ENCODE measurements at regions of chr14 and their contacts with region 1.

Region 1: DNA sequence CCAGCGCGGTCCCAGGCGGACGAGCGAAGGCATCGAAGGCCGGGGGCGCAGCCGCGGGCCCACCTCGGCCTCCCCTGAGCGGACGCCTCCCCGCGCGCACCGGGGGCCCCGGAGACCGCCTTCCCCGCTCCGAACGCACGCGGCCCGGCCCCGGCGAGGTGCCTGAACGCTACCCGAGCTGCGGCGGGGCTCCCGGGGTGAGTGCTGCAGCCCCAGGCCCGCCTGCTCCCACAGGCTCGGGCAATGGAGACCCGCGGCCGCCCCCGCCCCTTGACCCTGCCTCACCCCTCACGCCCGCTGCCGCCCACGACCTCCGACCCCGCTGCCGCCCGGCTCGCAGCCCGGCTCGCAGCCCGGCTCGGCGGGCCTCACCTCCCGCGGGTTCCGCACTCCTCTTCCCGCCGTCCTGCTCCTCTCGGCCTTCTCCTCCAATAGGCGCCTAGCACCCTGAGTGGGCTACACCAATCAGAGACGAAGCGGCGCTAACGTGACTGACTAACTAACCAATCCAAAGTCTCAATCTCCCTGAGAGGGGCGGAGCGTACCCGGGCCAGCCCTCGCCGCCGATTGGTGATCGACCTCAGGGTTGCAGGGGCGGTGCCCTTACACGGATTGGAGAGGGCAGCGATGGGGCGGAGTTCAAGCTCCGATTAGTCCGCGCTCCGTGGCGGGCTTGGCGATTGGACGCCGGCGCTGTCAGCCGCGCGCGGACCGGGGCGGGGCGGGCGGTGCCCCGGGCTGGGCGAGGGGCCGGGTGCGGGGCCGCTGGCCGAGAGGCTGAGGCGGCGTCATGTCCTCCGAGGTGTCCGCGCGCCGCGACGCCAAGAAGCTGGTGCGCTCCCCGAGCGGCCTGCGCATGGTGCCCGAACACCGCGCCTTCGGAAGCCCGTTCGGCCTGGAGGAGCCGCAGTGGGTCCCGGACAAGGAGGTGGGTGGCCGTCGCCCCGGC is at the starts of genes XRCC3 and ZFYVE21:
- DNase-seq: peak; percentile 96 to 100 (median 100)
- ATAC-seq: peak; percentile 97
- H3K4me3 ChIP-seq: peak within 1 kb of the TSS; percentile 56
- H3K4me3 Mint-ChIP-seq: peak within 1 kb of the TSS; percentile 89 to 98 (median 94)
- H3K27ac ChIP-seq: peak within 1 kb of the TSS; percentile 73
- H3K27ac Mint-ChIP-seq: peak within 1 kb of the TSS; percentile 40 to 95 (median 91)
- H3K4me1 ChIP-seq: peaks cover 8 to 13% of the 10 kb centered on the region in 2 donors
- H3K4me1 Mint-ChIP-seq: peaks cover 38 to 69% (median 52%) of the 10 kb centered on the region in 7 donors
- H3K27me3 ChIP-seq: no peaks in the 10 kb centered on the region
- H3K27me3 Mint-ChIP-seq: peaks cover 0 to 2% (median 0%) of the 10 kb centered on the region in 5 donors
- total RNA-seq, gene XRCC3: 9.3 to 38.9 (median 15.9) TPM
- total RNA-seq, gene ZFYVE21: 5.8 to 19.0 (median 16.8) TPM

Region 2: GRCh38 chr14:103385152-103385993 is 330.0 kb before region 1 on chr14 and contains the start of gene MARK3:
- CTCF ChIA-PET with region 1: no interaction called
- POLR2A ChIA-PET with region 1: no interaction called
- intact Hi-C with region 1: loop called (anchors 1 to 2 kb)
- DNase-seq: peak; percentile 92 to 96 (median 95)
- ATAC-seq: peak; percentile 93
- H3K4me3 ChIP-seq: peak within 1 kb of the TSS; percentile 98
- H3K4me3 Mint-ChIP-seq: peak within 1 kb of the TSS; percentile 94 to 99 (median 96)
- H3K27ac ChIP-seq: peak within 1 kb of the TSS; percentile 90
- H3K27ac Mint-ChIP-seq: peak within 1 kb of the TSS; percentile 91 to 98 (median 95)
- H3K4me1 ChIP-seq: peaks cover 26 to 32% of the 10 kb centered on the region in 2 donors
- H3K4me1 Mint-ChIP-seq: peaks cover 12 to 51% (median 37%) of the 10 kb centered on the region in 7 donors
- H3K27me3 ChIP-seq: no peaks in the 10 kb centered on the region
- H3K27me3 Mint-ChIP-seq: peaks cover 0 to 13% (median 9%) of the 10 kb centered on the region in 5 donors
- total RNA-seq, gene MARK3: 86.9 to 133 (median 116) TPM

Region 3: DNA sequence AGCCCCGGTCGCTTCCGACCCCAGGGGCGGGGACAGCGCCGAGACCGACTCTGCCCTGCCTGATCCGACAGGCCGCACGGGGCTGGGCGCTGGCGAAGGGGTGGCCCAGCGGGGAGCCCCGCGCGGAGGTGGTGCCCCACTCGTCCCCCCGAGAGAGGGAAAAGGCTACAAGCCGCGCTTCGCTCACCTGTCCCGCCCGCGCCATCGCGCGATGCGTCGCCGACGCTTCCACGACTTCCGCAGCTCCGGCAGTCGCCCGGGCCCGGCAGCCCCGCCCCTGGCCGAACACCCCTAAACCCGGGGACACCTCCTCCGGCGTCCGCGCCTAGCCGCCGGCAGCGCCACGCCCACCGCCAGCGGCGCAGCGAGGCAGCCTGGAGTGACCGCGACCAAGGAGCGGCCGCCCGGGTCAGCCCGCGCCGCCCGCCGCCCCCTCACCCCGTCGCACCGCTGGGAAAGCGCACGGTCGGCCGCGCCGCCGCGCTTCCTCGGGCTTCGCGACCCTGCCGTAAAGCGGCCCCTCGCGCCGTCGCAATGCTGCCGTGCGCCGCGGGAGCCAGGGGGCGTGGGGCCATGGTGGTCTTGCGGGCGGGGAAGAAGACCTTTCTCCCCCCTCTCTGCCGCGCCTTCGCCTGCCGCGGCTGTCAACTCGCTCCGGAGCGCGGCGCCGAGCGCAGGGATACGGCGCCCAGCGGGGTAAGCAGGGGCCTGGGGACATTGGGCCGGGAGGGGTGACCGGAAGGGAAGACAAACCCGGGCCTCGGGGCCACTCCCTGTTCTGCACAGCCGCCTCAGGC is 152.7 kb before region 1 on chr14 and contains the starts of genes BAG5 and COA8:
- CTCF ChIA-PET with region 1: no interaction called
- POLR2A ChIA-PET with region 1: no interaction called
- intact Hi-C with region 1: loop called (anchors 1 kb)
- DNase-seq: peak; percentile 81 to 94 (median 88)
- ATAC-seq: peak; percentile 91
- H3K4me3 ChIP-seq: peak within 1 kb of the TSS; percentile 91
- H3K4me3 Mint-ChIP-seq: peak within 1 kb of the TSS; percentile 91 to 98 (median 94)
- H3K27ac ChIP-seq: peak within 1 kb of the TSS; percentile 87
- H3K27ac Mint-ChIP-seq: peak within 1 kb of the TSS; percentile 87 to 96 (median 92)
- H3K4me1 ChIP-seq: peaks cover 32 to 38% of the 10 kb centered on the region in 2 donors
- H3K4me1 Mint-ChIP-seq: peaks cover 47 to 73% (median 62%) of the 10 kb centered on the region in 7 donors
- H3K27me3 ChIP-seq: no peaks in the 10 kb centered on the region
- H3K27me3 Mint-ChIP-seq: no peaks in the 10 kb centered on the region
- total RNA-seq, gene BAG5: 29.9 to 38.9 (median 36.4) TPM
- total RNA-seq, gene COA8: 13.6 to 26.3 (median 24.1) TPM

Region 4: DNA sequence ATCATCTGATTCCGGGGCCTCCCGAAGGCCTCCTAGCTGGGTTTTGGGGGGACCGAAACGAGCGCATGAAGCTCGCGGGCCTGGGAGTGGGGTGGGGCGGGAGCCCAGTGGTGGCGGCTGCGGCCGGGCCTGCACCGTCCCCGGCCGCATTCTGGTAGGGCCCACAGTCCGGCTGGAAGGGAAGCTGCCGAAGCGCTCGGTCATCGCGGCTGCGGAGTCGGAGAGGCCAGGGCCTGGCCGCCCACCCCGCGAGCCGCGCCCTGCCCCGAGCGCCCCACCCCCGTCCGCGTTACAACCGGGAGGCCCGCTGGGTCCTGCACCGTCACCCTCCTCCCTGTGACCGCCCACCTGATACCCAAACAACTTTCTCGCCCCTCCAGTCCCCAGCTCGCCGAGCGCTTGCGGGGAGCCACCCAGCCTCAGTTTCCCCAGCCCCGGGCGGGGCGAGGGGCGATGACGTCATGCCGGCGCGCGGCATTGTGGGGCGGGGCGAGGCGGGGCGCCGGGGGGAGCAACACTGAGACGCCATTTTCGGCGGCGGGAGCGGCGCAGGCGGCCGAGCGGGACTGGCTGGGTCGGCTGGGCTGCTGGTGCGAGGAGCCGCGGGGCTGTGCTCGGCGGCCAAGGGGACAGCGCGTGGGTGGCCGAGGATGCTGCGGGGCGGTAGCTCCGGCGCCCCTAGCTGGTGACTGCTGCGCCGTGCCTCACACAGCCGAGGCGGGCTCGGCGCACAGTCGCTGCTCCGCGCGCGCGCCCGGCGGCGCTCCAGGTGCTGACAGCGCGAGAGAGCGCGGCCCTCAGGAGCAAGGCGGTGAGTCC is 86.4 kb before region 1 on chr14 and contains the start of gene KLC1:
- CTCF ChIA-PET with region 1: no interaction called
- POLR2A ChIA-PET with region 1: interaction called, 3 read pairs
- intact Hi-C with region 1: loop called (anchors 1 kb)
- DNase-seq: peak; percentile 71 to 93 (median 84)
- ATAC-seq: peak; percentile 87
- H3K4me3 ChIP-seq: peak within 1 kb of the TSS; percentile 78
- H3K4me3 Mint-ChIP-seq: peak within 1 kb of the TSS; percentile 74 to 91 (median 88)
- H3K27ac ChIP-seq: peak within 1 kb of the TSS; percentile 98
- H3K27ac Mint-ChIP-seq: peak within 1 kb of the TSS; percentile 60 to 93 (median 88)
- H3K4me1 ChIP-seq: peaks cover 18 to 29% of the 10 kb centered on the region in 2 donors
- H3K4me1 Mint-ChIP-seq: peaks cover 23 to 64% (median 38%) of the 10 kb centered on the region in 7 donors
- H3K27me3 ChIP-seq: no peaks in the 10 kb centered on the region
- H3K27me3 Mint-ChIP-seq: no peaks in the 10 kb centered on the region
- total RNA-seq, gene KLC1: 150 to 268 (median 174) TPM

Region 5: DNA sequence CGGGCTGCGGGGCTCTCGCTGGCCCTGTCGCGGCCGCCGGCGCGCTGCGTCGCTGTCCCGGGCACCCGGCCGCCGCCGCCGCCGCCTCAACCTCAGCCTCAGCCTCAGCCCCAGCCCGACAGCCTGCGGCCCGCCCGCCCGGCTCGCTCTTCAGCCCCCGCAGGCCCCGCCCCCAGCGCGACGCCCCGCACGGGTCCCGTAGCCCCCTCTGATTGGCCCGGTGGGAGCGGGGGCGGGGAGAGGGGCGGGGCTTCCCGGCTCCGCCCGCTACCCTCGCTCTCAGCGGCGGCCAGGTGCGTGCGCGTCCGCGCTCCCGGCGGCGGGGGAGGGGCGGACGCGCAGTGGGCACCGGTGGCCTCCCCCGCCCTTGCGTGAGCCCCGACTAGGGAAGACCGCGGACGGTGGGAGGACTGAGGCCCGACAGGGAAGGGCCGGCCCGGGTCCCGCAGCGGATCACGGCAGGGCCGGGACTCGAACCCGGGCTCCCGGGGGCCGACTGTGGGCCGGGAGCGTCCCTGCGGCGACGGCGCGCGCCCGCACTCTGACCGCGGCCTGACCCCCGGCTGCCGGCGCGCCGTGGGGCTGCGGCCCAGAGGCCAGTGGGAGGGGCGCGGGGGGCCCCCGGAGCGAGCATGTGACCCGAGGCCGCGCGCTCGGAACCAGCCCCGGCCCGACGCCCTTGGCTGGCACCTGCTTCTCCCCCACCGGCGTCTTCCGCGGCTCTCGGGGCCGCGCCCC is 132.3 kb after region 1 on chr14 and contains the start of gene PPP1R13B:
- CTCF ChIA-PET with region 1: no interaction called
- POLR2A ChIA-PET with region 1: no interaction called
- intact Hi-C with region 1: loop called (anchors 1 to 5 kb)
- DNase-seq: peak; percentile 85 to 97 (median 91)
- ATAC-seq: peak; percentile 99
- H3K4me3 ChIP-seq: peak within 1 kb of the TSS; percentile 51
- H3K4me3 Mint-ChIP-seq: peak within 1 kb of the TSS; percentile 78 to 94 (median 89)
- H3K27ac ChIP-seq: peak within 1 kb of the TSS; percentile 67
- H3K27ac Mint-ChIP-seq: peak within 1 kb of the TSS; percentile 60 to 92 (median 79)
- H3K4me1 ChIP-seq: no peaks in the 10 kb centered on the region
- H3K4me1 Mint-ChIP-seq: peaks cover 11 to 24% (median 17%) of the 10 kb centered on the region in 7 donors
- H3K27me3 ChIP-seq: no peaks in the 10 kb centered on the region
- H3K27me3 Mint-ChIP-seq: peaks cover 0 to 36% (median 0%) of the 10 kb centered on the region in 5 donors
- total RNA-seq, gene PPP1R13B: 10.8 to 26.8 (median 17.7) TPM